Activated CD4-positive, alpha-beta T cell treated with anti-CD3 and anti-CD28 coated beads for 36 hours (primary cell): ENCODE measurements at regions of chr6 and their contacts with region 1.

Region 1: GRCh38 chr6:159789377-159790148 is at the start of gene TCP1:
- DNase-seq: peak; percentile 100
- ATAC-seq: peak; percentile 89
- H3K4me3 Mint-ChIP-seq: peak within 1 kb of the TSS; percentile 86
- H3K27ac Mint-ChIP-seq: peak within 1 kb of the TSS; percentile 99
- H3K4me1 Mint-ChIP-seq: peaks cover 62% of the 10 kb centered on the region
- H3K27me3 Mint-ChIP-seq: no peaks in the 10 kb centered on the region
- total RNA-seq, gene TCP1: 358 to 496 TPM

Region 2: DNA sequence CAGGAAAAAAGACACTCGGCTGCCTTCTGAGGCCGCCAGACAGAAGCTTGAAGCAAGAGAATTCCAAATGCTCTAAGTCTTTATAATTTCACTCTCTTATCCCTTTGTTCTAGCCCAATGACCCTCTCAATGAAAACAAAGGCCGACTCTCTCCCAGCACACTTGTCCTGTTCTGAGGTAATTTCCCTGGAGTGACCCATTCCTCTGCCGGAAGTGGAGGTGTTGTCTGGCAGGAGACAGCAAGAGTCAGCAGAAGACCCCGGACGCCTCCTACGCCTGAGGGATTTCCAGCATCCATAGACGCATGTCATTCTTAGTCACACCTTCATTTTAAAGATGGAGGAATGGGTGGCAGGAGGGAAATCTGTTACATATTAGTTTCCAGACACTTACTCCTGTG is 206.8 kb before region 1 on chr6:
- CTCF ChIA-PET with region 1: no interaction called
- POLR2A ChIA-PET with region 1: interaction called, 12 read pairs
- intact Hi-C with region 1: no loop called
- DNase-seq: no peak
- ATAC-seq: no peak
- H3K4me3 Mint-ChIP-seq: no peak overlapping the region
- H3K27ac Mint-ChIP-seq: no peak overlapping the region
- H3K4me1 Mint-ChIP-seq: no peaks in the 10 kb centered on the region
- H3K27me3 Mint-ChIP-seq: peaks cover 15% of the 10 kb centered on the region

Region 3: GRCh38 chr6:159742165-159742564 is 47.4 kb before region 1 on chr6:
- CTCF ChIA-PET with region 1: interaction called, 3 read pairs
- POLR2A ChIA-PET with region 1: no interaction called
- intact Hi-C with region 1: loop called in 1 of 2 experiments (anchors 5 kb)
- DNase-seq: no peak
- ATAC-seq: no peak
- H3K4me3 Mint-ChIP-seq: no peak overlapping the region
- H3K27ac Mint-ChIP-seq: peak overlapping the region; percentile 55
- H3K4me1 Mint-ChIP-seq: peaks cover 19% of the 10 kb centered on the region
- H3K27me3 Mint-ChIP-seq: no peaks in the 10 kb centered on the region

Region 4: DNA sequence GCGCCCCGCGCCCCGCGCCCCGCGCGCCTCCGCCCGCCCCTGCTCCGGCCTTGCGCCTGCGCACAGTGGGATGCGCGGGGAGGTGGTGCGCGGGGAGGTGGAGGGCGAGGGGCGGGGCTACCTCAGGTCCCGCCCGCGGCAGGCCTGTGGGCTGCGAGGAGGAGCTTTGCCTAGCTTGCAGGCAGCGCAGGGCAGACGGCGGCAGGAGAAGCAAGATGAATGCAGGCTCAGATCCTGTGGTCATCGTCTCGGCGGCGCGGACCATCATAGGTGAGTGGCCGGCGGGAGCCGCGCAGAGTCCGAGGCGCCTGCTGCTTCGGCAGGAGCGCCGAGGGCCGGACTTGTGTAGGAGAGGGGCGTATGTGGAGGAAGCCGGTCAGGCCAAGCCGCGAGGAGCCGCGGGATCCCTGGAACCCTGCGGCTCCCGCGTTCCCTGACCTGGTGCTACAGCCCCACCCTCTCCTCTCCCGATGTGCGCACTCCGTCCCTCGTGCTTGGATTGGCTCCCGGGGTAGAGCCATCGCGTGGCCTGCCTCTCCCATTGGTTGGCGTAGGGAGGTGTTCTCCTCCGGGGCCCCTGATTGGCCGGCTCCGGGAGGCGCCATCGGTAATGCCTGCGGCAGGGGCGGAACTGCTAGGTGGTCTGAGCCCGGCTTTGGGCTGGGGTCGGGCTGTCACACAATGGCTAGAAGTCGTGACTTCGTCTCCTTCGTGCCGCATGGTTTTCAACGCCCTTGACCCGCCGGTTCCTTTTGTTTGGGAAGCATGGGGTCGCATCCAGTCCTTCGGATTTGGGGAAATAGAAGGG is 27.5 kb before region 1 on chr6 and contains the start of gene ACAT2:
- CTCF ChIA-PET with region 1: interaction called, 4 read pairs
- POLR2A ChIA-PET with region 1: interaction called, 24 read pairs
- intact Hi-C with region 1: loop called (anchors 1 kb)
- DNase-seq: peak; percentile 96
- ATAC-seq: peak; percentile 97
- H3K4me3 Mint-ChIP-seq: peak within 1 kb of the TSS; percentile 95
- H3K27ac Mint-ChIP-seq: peak within 1 kb of the TSS; percentile 95
- H3K4me1 Mint-ChIP-seq: peaks cover 27% of the 10 kb centered on the region
- H3K27me3 Mint-ChIP-seq: no peaks in the 10 kb centered on the region
- total RNA-seq, gene ACAT2: 55.0 to 82.1 TPM

Region 5: GRCh38 chr6:159880412-159880975 is 90.9 kb after region 1 on chr6:
- CTCF ChIA-PET with region 1: no interaction called
- POLR2A ChIA-PET with region 1: no interaction called
- intact Hi-C with region 1: no loop called
- DNase-seq: no peak
- ATAC-seq: no peak
- H3K4me3 Mint-ChIP-seq: no peak overlapping the region
- H3K27ac Mint-ChIP-seq: no peak overlapping the region
- H3K4me1 Mint-ChIP-seq: no peaks in the 10 kb centered on the region
- H3K27me3 Mint-ChIP-seq: peaks cover 4% of the 10 kb centered on the region

Region 6: DNA sequence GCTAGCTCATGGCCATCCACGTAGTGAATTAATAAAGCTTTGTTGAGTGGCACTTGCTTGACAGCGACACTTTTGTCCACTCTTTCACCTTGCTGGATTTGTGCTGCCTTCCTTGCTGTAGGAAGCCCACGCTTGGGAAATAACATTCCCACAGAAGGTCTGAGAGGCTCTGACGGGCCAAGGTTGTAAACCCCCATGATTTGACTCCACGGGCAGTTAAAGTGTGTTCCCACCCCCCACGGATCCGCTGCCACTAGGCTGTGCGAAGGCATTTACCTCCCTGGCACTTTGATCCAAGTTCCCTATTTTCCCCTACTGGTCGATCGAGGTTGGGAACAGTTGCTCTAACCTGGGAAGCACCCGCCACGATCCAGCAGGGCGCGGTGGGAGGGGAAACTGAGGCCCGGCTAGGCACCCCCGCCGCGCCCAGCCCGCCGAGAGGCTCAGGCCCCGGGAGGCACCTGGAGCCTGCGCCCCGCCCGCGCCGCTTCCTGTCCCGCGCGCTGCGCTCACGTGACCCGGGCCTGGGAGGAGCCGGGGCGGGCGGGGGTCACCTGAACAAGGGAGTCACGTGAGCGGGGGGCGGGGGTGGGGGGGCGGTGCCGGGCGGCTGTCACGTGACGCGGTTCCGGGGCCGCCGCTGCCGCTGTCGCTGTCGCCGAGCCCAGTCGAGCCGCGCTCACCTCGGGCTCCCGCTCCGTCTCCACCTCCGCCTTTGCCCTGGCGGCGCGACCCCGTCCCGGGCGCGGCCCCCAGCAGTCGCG is 179.1 kb after region 1 on chr6 and contains the start of gene IGF2R:
- CTCF ChIA-PET with region 1: interaction called, 3 read pairs
- POLR2A ChIA-PET with region 1: interaction called, 5 read pairs
- intact Hi-C with region 1: loop called in 1 of 2 experiments (anchors 1 kb)
- DNase-seq: peak; percentile 97
- ATAC-seq: peak; percentile 91
- H3K4me3 Mint-ChIP-seq: peak within 1 kb of the TSS; percentile 93
- H3K27ac Mint-ChIP-seq: peak within 1 kb of the TSS; percentile 92
- H3K4me1 Mint-ChIP-seq: peaks cover 38% of the 10 kb centered on the region
- H3K27me3 Mint-ChIP-seq: no peaks in the 10 kb centered on the region
- total RNA-seq, gene IGF2R: 55.6 to 65.6 TPM